Breast epithelium (tissue), 4 donors: ENCODE measurements at regions of chr3 and their contacts with region 1.

Region 1: DNA sequence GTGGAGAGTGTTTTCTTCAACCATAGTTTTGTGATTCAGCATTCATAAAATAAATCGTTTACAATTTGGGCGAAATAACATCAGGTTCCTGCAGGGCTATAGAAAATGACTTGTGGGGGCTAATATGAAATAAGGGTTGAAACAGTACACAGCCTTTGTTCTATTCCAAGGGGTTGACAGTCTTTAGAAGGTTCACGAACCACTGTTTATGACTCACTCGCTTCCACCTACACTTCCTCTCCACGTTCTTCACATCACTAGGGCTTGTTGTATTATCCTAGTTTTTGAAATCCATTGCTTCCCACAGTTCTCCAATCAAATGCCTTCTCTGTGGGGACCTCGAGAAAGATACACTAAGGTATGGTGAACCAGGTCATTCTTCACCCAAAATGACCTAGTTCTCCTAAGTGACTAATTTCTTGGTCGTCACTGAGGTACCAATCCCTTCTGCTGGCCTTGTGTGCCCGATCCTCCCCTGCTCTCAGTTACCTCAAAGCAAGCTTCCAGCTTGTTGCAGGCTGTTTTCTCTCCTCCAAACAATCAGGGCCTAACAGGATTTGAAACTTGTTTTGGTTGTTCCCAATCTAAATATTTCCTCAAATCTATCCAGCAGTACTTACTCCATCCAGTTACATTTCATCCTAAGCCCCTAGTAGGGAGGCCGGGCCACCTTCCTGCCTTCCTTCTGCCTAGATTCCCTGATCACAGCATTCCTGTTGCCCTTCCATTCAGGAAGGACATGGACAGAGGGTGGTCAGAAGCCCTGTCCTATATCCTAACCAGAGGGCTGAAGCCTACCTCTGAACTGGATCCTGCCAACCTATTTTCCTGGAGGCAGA is 23.1 kb upstream of the TBL1XR1 start:
- DNase-seq: no peak
- H3K4me3 ChIP-seq: no peak overlapping the region
- H3K27ac ChIP-seq: no peak overlapping the region
- H3K4me1 ChIP-seq: no peaks in the 10 kb centered on the region
- H3K27me3 ChIP-seq: no peaks in the 10 kb centered on the region
- CTCF ChIP-seq: no peak
- POLR2A ChIP-seq: no peak

Region 2: DNA sequence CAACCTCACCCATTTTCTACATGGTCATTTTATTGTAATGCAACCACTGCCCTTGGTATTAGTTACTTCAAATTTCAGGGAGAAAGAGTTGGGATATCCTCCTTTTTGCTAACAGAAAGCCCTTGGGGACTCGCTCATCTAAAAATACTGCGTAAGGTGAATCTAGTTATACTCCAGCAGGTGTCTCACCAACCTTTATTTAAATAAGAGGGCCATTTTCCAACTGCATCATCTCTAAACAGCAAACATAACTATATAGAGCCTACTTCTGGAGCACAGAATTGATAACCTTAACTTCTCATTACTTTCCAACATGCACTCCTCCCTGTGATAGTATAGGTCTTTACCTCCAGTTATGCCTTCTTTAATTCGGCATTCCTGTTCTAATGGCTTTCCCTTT is 100.5 kb before region 1 on chr3:
- intact Hi-C with region 1: no loop called
- DNase-seq: no peak
- H3K4me3 ChIP-seq: no peak overlapping the region
- H3K27ac ChIP-seq: no peak overlapping the region
- H3K4me1 ChIP-seq: peaks cover 0 to 6% of the 10 kb centered on the region in 2 donors
- H3K27me3 ChIP-seq: no peaks in the 10 kb centered on the region
- CTCF ChIP-seq: no peak
- POLR2A ChIP-seq: no peak

Region 3: GRCh38 chr3:177431525-177432176 is 211.3 kb after region 1 on chr3:
- intact Hi-C with region 1: loop called (anchors 5 kb)
- DNase-seq: no peak
- H3K4me3 ChIP-seq: no peak overlapping the region
- H3K27ac ChIP-seq: no peak overlapping the region
- H3K4me1 ChIP-seq: no peaks in the 10 kb centered on the region
- H3K27me3 ChIP-seq: no peaks in the 10 kb centered on the region
- CTCF ChIP-seq: no peak
- POLR2A ChIP-seq: no peak

Region 4: GRCh38 chr3:177633671-177634207 is 413.4 kb after region 1 on chr3:
- intact Hi-C with region 1: loop called (anchors 5 kb)
- DNase-seq: no peak
- H3K4me3 ChIP-seq: no peak overlapping the region
- H3K27ac ChIP-seq: no peak overlapping the region
- H3K4me1 ChIP-seq: no peaks in the 10 kb centered on the region
- H3K27me3 ChIP-seq: no peaks in the 10 kb centered on the region
- CTCF ChIP-seq: no peak
- POLR2A ChIP-seq: no peak